ENCODE measurements at regions of chr14 and their contacts with region 1.

Region 1: GRCh38 chr14:39015360-39015961 is 87.6 kb downstream of the SEC23A start:
- DNase-seq: peak; percentile 51
- H3K4me3 Mint-ChIP-seq: no peak overlapping the region
- H3K27ac Mint-ChIP-seq: no peak overlapping the region
- H3K4me1 Mint-ChIP-seq: no peaks in the 10 kb centered on the region
- H3K27me3 Mint-ChIP-seq: no peaks in the 10 kb centered on the region

Region 2: GRCh38 chr14:37903343-37904191 is 1111.9 kb before region 1 on chr14:
- CTCF ChIA-PET with region 1: interaction called, 3 read pairs
- intact Hi-C with region 1: loop called (anchors 1 kb)
- DNase-seq: peak; percentile 9
- H3K4me3 Mint-ChIP-seq: no peak overlapping the region
- H3K27ac Mint-ChIP-seq: no peak overlapping the region
- H3K4me1 Mint-ChIP-seq: peaks cover 2% of the 10 kb centered on the region
- H3K27me3 Mint-ChIP-seq: peaks cover 16% of the 10 kb centered on the region

Region 3: GRCh38 chr14:38721822-38722431 is 293.5 kb before region 1 on chr14:
- CTCF ChIA-PET with region 1: interaction called, 8 read pairs
- intact Hi-C with region 1: loop called (anchors 1 kb)
- DNase-seq: peak; percentile 64
- H3K4me3 Mint-ChIP-seq: no peak overlapping the region
- H3K27ac Mint-ChIP-seq: no peak overlapping the region
- H3K4me1 Mint-ChIP-seq: no peaks in the 10 kb centered on the region
- H3K27me3 Mint-ChIP-seq: peaks cover 2% of the 10 kb centered on the region

Region 4: GRCh38 chr14:38867561-38868150 is 147.8 kb before region 1 on chr14:
- CTCF ChIA-PET with region 1: interaction called, 11 read pairs
- intact Hi-C with region 1: loop called (anchors 1 kb)
- DNase-seq: peak; percentile 80
- H3K4me3 Mint-ChIP-seq: no peak overlapping the region
- H3K27ac Mint-ChIP-seq: no peak overlapping the region
- H3K4me1 Mint-ChIP-seq: no peaks in the 10 kb centered on the region
- H3K27me3 Mint-ChIP-seq: peaks cover 5% of the 10 kb centered on the region

Region 5: GRCh38 chr14:38994731-38995130 is 20.7 kb before region 1 on chr14:
- CTCF ChIA-PET with region 1: interaction called, 10 read pairs
- intact Hi-C with region 1: no loop called
- DNase-seq: no peak
- H3K4me3 Mint-ChIP-seq: no peak overlapping the region
- H3K27ac Mint-ChIP-seq: no peak overlapping the region
- H3K4me1 Mint-ChIP-seq: peaks cover 4% of the 10 kb centered on the region
- H3K27me3 Mint-ChIP-seq: peaks cover 4% of the 10 kb centered on the region

Region 6: GRCh38 chr14:39426605-39427004 is 411.1 kb after region 1 on chr14:
- CTCF ChIA-PET with region 1: interaction called, 3 read pairs
- intact Hi-C with region 1: loop called (anchors 1 kb)
- DNase-seq: no peak
- H3K4me3 Mint-ChIP-seq: peak overlapping the region; percentile 45
- H3K27ac Mint-ChIP-seq: no peak overlapping the region
- H3K4me1 Mint-ChIP-seq: peaks cover 63% of the 10 kb centered on the region
- H3K27me3 Mint-ChIP-seq: no peaks in the 10 kb centered on the region

Measured in activated naive CD4-positive, alpha-beta T cell treated with anti-CD3 and anti-CD28 coated beads for 36 hours (primary cell).